ENCODE measurements at regions of chr22 and their contacts with region 1.

Region 1: GRCh38 chr22:35350539-35351503 is 30.1 kb upstream of the HMOX1 start:
- DNase-seq: peak; percentile 98

Region 2: DNA sequence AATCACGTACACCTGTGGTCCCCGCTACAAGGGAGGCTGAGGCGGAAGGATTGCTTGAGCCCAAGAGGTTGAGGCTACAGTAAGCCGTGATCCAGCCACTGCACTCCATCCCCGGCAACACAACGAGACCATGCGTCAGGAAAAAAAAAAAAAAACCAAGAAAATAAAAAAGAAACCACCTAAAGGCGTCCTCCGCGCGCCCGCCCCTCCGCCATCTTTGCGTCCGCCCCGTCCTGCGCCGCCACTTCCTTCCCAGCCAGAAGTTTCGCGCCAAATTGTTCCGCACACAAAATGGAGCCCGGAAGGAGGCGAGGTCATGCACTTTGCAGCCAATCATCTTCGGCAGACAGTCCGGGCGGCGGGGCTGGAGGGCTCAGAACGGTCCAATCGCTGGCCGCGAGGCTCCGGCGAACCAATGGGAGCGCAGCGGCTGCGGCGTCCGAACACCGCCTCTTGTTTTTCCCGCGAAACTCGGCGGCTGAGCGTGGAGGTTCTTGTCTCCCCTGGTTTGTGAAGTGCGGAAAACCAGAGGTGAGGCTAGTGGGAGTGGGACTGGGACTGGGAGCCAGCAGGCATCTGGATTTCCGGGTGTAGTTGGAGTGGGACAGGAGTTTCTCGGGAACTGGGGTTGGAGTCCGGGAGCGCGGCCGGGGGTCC is 49.0 kb after region 1 on chr22 and contains the start of gene MCM5:
- CTCF ChIA-PET with region 1: interaction called, 4 read pairs
- POLR2A ChIA-PET with region 1: interaction called, 12 read pairs
- DNase-seq: peak; percentile 99

Region 3: DNA sequence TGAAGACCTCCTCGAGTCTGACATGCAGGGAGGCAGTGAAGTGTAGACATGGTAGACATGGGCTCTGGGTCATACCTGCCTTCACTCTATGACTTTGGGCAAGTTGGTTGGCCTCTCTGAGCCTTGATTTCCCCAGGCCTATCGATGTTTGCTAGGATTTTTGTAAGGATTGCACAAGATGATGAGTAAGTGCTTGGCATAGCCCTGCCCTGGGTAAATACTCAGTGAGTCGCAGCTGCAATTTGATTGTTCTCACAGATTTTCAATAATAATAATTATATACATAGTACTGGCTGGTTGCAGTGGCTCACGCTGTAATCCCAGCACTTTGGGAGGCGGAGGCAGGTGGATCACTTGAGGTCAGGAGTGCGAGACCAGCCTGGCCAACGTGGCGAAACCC is 67.3 kb after region 1 on chr22:
- CTCF ChIA-PET with region 1: no interaction called
- POLR2A ChIA-PET with region 1: no interaction called
- DNase-seq: no peak

Region 4: DNA sequence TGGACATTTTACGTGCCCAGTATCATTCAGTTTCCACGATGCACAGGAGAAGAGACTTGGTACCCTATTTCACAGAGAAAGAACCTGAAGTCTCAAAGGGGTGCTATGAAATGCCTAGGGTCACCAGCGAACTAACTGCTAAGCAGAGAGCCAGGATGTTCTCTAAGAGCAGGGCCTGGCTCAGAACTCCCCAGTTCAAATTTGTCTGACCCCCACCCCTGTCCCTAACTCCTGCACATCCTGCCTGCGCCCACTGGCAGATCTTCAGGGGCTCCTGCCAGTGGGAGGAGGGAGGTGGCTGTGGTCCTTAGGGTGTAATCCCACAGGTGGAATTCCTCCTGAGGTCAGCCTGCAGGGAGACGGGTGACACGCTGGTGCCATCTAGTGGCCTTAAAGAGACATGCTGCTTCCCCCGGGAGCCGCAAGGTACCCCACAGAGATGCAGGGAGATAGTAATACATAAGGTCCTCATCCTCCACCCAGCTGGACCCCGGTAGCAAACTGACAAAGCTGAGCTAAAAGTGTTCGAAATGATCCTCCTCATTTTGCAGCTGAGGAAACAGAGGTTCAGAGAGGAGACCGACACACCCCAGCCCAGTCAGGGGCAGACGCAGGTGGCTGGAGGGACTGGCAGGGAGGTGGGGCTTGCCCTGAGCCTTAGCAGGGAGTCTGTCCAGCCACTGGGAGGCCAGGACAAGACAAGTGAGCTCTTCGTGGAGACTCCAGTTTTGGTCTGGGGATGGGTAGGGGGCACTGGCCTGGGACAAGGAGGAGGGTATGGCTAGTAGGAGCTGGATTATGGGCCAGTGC is 232.2 kb after region 1 on chr22:
- CTCF ChIA-PET with region 1: interaction called, 11 read pairs
- POLR2A ChIA-PET with region 1: no interaction called
- DNase-seq: peak; percentile 91

Measured in HEK293T (cell line).